H1 (cell line): ENCODE measurements at regions of chr1 and their contacts with region 1.

Region 1: GRCh38 chr1:8727809-8728213 is 89.6 kb downstream of the RERE start:
- DNase-seq: no peak
- H3K4me3 ChIP-seq: no peak overlapping the region
- H3K27ac ChIP-seq: no peak overlapping the region
- H3K4me1 ChIP-seq: peaks cover 0 to 4% (median 2%) of the 10 kb centered on the region in 4 experiments; a peak in 2 of 7 replicates
- H3K27me3 ChIP-seq: no peaks in the 10 kb centered on the region
- CTCF ChIP-seq: no peak
- EP300 ChIP-seq: no peak
- POLR2A ChIP-seq: no peak
- RAD21 ChIP-seq: no peak

Region 2: DNA sequence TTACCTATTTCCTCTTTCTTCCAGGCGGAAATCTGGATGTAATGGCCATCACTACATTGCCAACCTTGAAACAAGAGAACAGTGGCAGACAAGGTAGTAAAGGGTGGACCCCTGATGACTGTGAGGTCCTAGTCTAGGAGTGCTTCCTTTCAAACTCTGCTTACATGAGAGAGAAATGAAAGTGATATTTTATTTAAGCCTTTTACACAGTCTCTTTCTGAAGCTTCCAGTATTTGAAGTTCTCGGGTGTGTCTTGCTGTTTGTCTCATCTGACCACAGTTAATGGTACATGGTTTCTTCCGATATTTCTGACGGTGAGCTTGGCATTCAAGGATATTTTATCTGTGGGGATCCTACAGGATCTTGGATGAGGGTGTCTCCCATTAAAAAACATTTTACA is 194.7 kb before region 1 on chr1:
- CTCF ChIA-PET with region 1: no interaction called
- POLR2A ChIA-PET with region 1: no interaction called
- DNase-seq: no peak
- H3K4me3 ChIP-seq: no peak overlapping the region
- H3K27ac ChIP-seq: no peak overlapping the region
- H3K4me1 ChIP-seq: no peaks in the 10 kb centered on the region
- H3K27me3 ChIP-seq: no peaks in the 10 kb centered on the region
- CTCF ChIP-seq: no peak
- EP300 ChIP-seq: no peak
- POLR2A ChIP-seq: no peak
- RAD21 ChIP-seq: no peak

Region 3: GRCh38 chr1:8560611-8561544 is 166.9 kb before region 1 on chr1:
- CTCF ChIA-PET with region 1: interaction called, 71 read pairs
- POLR2A ChIA-PET with region 1: interaction called, 3 read pairs
- DNase-seq: no peak
- H3K4me3 ChIP-seq: no peak overlapping the region
- H3K27ac ChIP-seq: no peak overlapping the region
- H3K4me1 ChIP-seq: peaks cover 0 to 6% (median 3%) of the 10 kb centered on the region in 4 experiments; a peak in 2 of 7 replicates
- H3K27me3 ChIP-seq: no peaks in the 10 kb centered on the region
- CTCF ChIP-seq: peak in 2 of 3 experiments; percentile 66 to 72; a peak in 2 of 4 replicates
- EP300 ChIP-seq: no peak
- POLR2A ChIP-seq: no peak
- RAD21 ChIP-seq: peak; percentile 86 to 87

Region 4: GRCh38 chr1:8571200-8571984 is 156.4 kb before region 1 on chr1:
- CTCF ChIA-PET with region 1: interaction called, 13 read pairs
- POLR2A ChIA-PET with region 1: no interaction called
- DNase-seq: no peak
- H3K4me3 ChIP-seq: no peak overlapping the region
- H3K27ac ChIP-seq: no peak overlapping the region
- H3K4me1 ChIP-seq: peaks cover 0 to 4% (median under 1%) of the 10 kb centered on the region in 4 experiments; a peak in 2 of 7 replicates
- H3K27me3 ChIP-seq: no peaks in the 10 kb centered on the region
- CTCF ChIP-seq: no peak
- EP300 ChIP-seq: no peak
- POLR2A ChIP-seq: no peak
- RAD21 ChIP-seq: no peak

Region 5: GRCh38 chr1:8671306-8671917 is 56.4 kb before region 1 on chr1:
- CTCF ChIA-PET with region 1: interaction called, 58 read pairs
- POLR2A ChIA-PET with region 1: interaction called, 3 read pairs
- DNase-seq: no peak
- H3K4me3 ChIP-seq: no peak overlapping the region
- H3K27ac ChIP-seq: no peak overlapping the region
- H3K4me1 ChIP-seq: peaks cover 5 to 18% (median 8%) of the 10 kb centered on the region in 4 experiments; a peak in 6 of 7 replicates
- H3K27me3 ChIP-seq: no peaks in the 10 kb centered on the region
- CTCF ChIP-seq: peak; percentile 30 to 77 (median 47)
- EP300 ChIP-seq: no peak
- POLR2A ChIP-seq: no peak
- RAD21 ChIP-seq: peak; percentile 66 to 72

Region 6: DNA sequence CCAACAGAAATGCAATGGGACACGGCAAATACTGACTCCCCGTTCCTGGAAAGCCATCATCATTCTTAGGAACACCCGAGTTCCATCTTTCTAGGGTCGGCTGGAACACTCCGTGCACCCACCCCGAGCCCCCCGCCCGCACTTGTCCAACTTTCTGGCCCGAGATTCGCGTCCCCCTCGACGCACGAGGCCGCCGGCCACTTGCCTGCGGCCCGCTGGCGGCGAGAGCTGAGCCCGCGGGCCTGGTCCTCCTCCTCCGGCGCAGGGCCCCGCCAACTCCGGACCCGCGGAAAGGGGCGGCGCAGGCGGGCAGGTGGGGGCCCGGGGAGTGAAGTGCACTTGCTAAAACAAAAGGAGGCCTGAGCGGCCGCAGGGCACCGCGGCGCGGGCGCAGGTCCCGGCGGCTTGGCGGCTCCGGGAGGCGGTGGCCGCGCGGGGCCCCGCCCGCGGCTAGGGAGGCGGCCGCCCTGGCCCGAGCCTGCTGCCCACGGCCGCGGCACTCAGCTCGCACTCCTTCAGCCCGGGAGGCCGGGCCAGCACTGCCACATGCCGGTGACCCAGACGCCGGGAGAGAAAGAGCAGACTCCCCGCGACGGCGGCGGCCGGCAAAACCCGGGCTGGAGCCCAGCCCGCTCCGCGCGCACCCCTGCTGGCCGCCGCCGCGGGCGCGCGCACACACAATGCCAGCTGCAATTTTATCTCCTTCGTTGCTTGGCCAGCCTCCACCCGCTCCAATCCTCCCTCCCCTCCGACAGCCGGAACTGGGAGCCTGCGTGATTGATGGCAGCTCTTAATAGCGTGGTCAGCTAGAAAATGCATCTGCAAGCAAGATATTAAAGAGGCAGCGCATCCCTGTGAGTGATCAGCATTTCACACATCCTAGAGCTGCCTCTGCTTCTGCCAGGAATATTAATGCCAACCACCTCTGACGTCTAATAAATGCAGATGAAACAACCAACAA is 24.7 kb before region 1 on chr1:
- CTCF ChIA-PET with region 1: interaction called, 33 read pairs
- POLR2A ChIA-PET with region 1: interaction called, 22 read pairs
- DNase-seq: peak; percentile 69 to 94
- H3K4me3 ChIP-seq: peak overlapping the region; percentile 65 to 98 (median 76)
- H3K27ac ChIP-seq: peak overlapping the region; percentile 86
- H3K4me1 ChIP-seq: peaks cover 2 to 24% (median 21%) of the 10 kb centered on the region in 4 experiments; a peak in 5 of 7 replicates
- H3K27me3 ChIP-seq: no peaks in the 10 kb centered on the region
- CTCF ChIP-seq: peak in 2 of 3 experiments; percentile 5; a peak in 2 of 4 replicates
- EP300 ChIP-seq: peak in 1 of 2 experiments; percentile 82; a peak in 1 of 3 replicates
- POLR2A ChIP-seq: peak; percentile 78 to 92
- RAD21 ChIP-seq: peak; percentile 11 to 37; a peak in 3 of 4 replicates

Region 7: GRCh38 chr1:8740034-8740449 is 12.2 kb after region 1 on chr1:
- CTCF ChIA-PET with region 1: interaction called, 21 read pairs
- POLR2A ChIA-PET with region 1: interaction called, 6 read pairs
- DNase-seq: no peak
- H3K4me3 ChIP-seq: no peak overlapping the region
- H3K27ac ChIP-seq: no peak overlapping the region
- H3K4me1 ChIP-seq: no peaks in the 10 kb centered on the region
- H3K27me3 ChIP-seq: no peaks in the 10 kb centered on the region
- CTCF ChIP-seq: no peak
- EP300 ChIP-seq: no peak
- POLR2A ChIP-seq: no peak
- RAD21 ChIP-seq: no peak